ENCODE measurements at regions of chr12 and their contacts with region 1.

Region 1: DNA sequence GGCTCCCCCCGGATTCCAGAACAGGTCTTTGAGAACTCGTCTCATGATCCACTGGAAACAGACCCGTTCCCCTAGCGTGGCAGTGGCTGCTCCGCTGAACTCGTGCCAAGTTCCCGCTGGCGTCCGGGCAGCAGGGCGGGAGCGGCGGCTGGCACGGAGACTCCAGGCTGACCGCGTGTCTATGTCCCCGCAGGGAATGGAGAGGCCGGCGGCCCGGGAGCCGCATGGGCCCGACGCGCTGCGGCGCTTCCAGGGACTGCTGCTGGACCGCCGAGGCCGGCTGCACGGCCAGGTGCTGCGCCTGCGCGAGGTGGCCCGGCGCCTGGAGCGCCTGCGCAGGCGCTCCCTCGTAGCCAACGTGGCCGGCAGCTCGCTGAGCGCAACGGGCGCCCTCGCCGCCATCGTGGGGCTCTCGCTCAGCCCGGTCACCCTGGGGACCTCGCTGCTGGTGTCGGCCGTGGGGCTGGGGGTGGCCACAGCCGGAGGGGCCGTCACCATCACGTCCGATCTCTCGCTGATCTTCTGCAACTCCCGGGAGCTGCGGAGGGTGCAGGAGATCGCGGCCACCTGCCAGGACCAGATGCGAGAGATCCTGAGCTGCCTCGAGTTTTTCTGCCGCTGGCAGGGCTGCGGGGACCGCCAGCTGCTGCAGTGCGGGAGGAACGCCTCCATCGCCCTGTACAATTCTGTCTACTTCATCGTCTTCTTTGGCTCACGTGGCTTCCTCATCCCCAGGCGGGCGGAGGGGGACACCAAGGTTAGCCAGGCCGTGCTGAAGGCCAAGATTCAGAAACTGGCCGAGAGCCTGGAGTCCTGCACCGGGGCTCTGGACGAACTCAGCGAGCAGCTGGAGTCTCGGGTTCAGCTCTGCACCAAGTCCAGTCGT is 1.5 kb downstream of the APOLD1 start:
- DNase-seq: peak; percentile 84 to 93 (median 90)
- ATAC-seq: peak; percentile 95
- H3K4me3 ChIP-seq: peak overlapping the region; percentile 46
- H3K27ac ChIP-seq: peak overlapping the region; percentile 81
- H3K4me1 ChIP-seq: peaks cover 15 to 37% of the 10 kb centered on the region in 2 experiments
- H3K27me3 ChIP-seq: no peaks in the 10 kb centered on the region
- CTCF ChIP-seq: peak in 1 of 3 experiments; percentile 8; a peak in 1 of 6 replicates
- EP300 ChIP-seq: no peak
- POLR2A ChIP-seq: peak; percentile 77
- RAD21 ChIP-seq: no peak

Region 2: GRCh38 chr12:12724661-12725545 is 62.1 kb before region 1 on chr12:
- CTCF ChIA-PET with region 1: no interaction called
- POLR2A ChIA-PET with region 1: interaction called, 5 read pairs
- in situ Hi-C with region 1: no loop called
- intact Hi-C with region 1: loop called (anchors 5 kb)
- DNase-seq: peak; percentile 34 to 91 (median 44)
- ATAC-seq: peak; percentile 40
- H3K4me3 ChIP-seq: peak overlapping the region; percentile 57
- H3K27ac ChIP-seq: peak overlapping the region; percentile 97
- H3K4me1 ChIP-seq: peaks cover 11 to 18% of the 10 kb centered on the region in 2 experiments; a peak in 2 of 5 replicates
- H3K27me3 ChIP-seq: no peaks in the 10 kb centered on the region
- CTCF ChIP-seq: no peak
- EP300 ChIP-seq: no peak
- POLR2A ChIP-seq: peak; percentile 52; the same call in 1 of the 2 replicates
- RAD21 ChIP-seq: no peak

Region 3: GRCh38 chr12:12813120-12814101 is 26.5 kb after region 1 on chr12 and contains the start of gene DDX47:
- CTCF ChIA-PET with region 1: no interaction called
- POLR2A ChIA-PET with region 1: interaction called, 3 read pairs
- in situ Hi-C with region 1: no loop called
- intact Hi-C with region 1: loop called (anchors 1 kb)
- DNase-seq: peak; percentile 84 to 92 (median 84)
- ATAC-seq: peak; percentile 97
- H3K4me3 ChIP-seq: peak within 1 kb of the TSS; percentile 70
- H3K27ac ChIP-seq: peak within 1 kb of the TSS; percentile 67
- H3K4me1 ChIP-seq: peaks cover 11 to 16% of the 10 kb centered on the region in 2 experiments; a peak in 4 of 5 replicates
- H3K27me3 ChIP-seq: no peaks in the 10 kb centered on the region
- CTCF ChIP-seq: peak; percentile 85 to 90 (median 90)
- EP300 ChIP-seq: 0 out of 2 replicates have a peak, but pooled peaks have one; percentile 12
- POLR2A ChIP-seq: peak; percentile 75
- RAD21 ChIP-seq: peak; percentile 29 to 40; a peak in 3 of 4 replicates
- polyA plus RNA-seq, gene DDX47: 157 to 186 TPM

Region 4: GRCh38 chr12:12909995-12910391 is 123.0 kb after region 1 on chr12:
- CTCF ChIA-PET with region 1: no interaction called
- POLR2A ChIA-PET with region 1: no interaction called
- in situ Hi-C with region 1: no loop called
- intact Hi-C with region 1: loop called (anchors 5 kb)
- DNase-seq: peak in 1 of 4 experiments; percentile 15
- ATAC-seq: peak; percentile 53
- H3K4me3 ChIP-seq: no peak overlapping the region
- H3K27ac ChIP-seq: no peak overlapping the region
- H3K4me1 ChIP-seq: peaks cover 6 to 14% of the 10 kb centered on the region in 2 experiments; a peak in 3 of 5 replicates
- H3K27me3 ChIP-seq: peaks cover 12 to 30% of the 10 kb centered on the region in 2 experiments; a peak in 4 of 5 replicates
- CTCF ChIP-seq: no peak
- EP300 ChIP-seq: no peak; the same call in 1 of the 2 replicates
- POLR2A ChIP-seq: no peak
- RAD21 ChIP-seq: no peak

Region 5: DNA sequence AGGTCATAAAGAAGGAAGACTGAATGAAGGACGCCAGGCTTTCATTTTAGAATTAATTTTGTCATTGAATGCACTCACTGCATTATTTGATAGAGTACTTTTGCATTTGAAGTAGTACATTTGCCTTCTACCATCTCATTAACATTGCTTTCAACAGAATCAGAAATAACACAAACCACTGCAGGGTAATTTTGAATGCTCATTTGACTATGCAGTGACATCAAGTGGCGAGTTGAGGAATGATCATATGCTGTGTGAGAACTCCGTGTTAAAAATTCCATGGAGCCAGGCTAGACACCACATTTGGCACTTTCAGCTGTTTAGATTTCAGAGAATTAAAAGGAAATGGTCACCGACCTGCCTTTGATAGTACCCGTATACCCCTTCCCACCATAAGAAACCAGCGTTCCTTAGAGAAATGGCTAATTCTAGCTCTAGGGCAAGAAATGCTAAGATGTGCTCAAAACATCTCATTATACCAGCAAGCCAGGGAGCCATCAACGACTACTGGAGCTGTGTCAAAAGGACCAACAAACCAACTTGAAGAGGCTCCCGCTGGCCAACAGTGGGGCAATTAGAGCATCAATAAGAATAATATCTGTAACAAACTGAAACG is 196.6 kb after region 1 on chr12:
- CTCF ChIA-PET with region 1: no interaction called
- POLR2A ChIA-PET with region 1: no interaction called
- in situ Hi-C with region 1: no loop called
- intact Hi-C with region 1: loop called (anchors 2 kb)
- DNase-seq: peak; percentile 16 to 29 (median 22)
- ATAC-seq: peak; percentile 81
- H3K4me3 ChIP-seq: no peak overlapping the region
- H3K27ac ChIP-seq: no peak overlapping the region
- H3K4me1 ChIP-seq: peaks cover 0 to 2% of the 10 kb centered on the region in 2 experiments; a peak in 1 of 5 replicates
- H3K27me3 ChIP-seq: no peaks in the 10 kb centered on the region
- CTCF ChIP-seq: peak; percentile 38 to 66 (median 52); a peak in 4 of 6 replicates
- EP300 ChIP-seq: no peak
- POLR2A ChIP-seq: no peak
- RAD21 ChIP-seq: peak; percentile 41 to 61

Region 6: DNA sequence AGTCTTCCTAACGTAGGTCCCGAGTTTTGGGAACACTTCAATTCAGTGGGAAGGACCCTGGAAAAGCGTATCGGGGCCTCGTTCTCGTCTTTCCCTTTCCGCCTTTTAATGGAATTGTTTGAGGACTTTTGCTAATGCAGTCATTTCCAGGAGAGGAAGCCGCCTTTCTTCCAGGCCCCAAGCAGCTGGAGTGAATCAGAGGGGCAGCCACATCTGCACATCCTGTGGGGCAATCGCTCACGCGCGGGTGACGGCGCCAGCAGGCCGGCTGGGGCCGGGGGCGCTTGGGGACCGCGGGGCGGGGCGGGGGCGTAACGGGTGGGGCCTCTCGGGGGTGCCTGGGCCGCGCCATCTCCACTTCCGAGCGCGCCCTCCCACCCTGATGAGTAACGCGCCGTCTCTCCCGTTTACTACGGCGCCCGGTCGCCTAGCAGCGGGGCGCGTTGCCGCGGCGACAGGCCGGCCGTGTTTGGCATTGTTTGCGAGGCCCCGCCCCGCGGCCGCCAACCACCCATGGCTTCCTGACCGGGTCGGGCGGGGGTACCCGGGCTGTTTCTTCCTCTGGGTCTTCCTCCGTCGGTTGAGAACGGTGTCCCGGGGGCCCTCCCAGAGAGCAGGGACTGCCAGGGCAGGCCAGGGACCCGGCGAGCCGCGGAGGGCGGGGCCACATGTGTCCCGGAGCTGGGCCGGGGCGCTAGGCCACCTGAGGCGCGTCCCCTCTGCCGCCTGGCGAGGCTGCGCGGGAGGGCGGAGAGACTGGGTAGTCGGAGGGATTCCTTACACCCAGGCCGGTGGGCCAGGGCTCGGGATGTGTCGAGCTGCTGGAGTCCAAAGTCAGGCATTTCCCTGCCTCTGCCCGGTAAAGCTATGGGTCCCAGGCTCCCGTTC is 314.2 kb after region 1 on chr12:
- CTCF ChIA-PET with region 1: no interaction called
- POLR2A ChIA-PET with region 1: no interaction called
- in situ Hi-C with region 1: no loop called
- intact Hi-C with region 1: no loop called
- DNase-seq: peak; percentile 65 to 83 (median 76)
- ATAC-seq: peak; percentile 94
- H3K4me3 ChIP-seq: peak overlapping the region; percentile 43
- H3K27ac ChIP-seq: no peak overlapping the region
- H3K4me1 ChIP-seq: peaks cover 0 to 10% of the 10 kb centered on the region in 2 experiments; a peak in 3 of 5 replicates
- H3K27me3 ChIP-seq: peaks cover 5 to 24% of the 10 kb centered on the region in 2 experiments; a peak in 4 of 5 replicates
- CTCF ChIP-seq: no peak
- EP300 ChIP-seq: no peak
- POLR2A ChIP-seq: no peak
- RAD21 ChIP-seq: no peak